Gastrocnemius medialis (tissue), 4 donors: ENCODE measurements at regions of chr20 and their contacts with region 1.

Region 1: DNA sequence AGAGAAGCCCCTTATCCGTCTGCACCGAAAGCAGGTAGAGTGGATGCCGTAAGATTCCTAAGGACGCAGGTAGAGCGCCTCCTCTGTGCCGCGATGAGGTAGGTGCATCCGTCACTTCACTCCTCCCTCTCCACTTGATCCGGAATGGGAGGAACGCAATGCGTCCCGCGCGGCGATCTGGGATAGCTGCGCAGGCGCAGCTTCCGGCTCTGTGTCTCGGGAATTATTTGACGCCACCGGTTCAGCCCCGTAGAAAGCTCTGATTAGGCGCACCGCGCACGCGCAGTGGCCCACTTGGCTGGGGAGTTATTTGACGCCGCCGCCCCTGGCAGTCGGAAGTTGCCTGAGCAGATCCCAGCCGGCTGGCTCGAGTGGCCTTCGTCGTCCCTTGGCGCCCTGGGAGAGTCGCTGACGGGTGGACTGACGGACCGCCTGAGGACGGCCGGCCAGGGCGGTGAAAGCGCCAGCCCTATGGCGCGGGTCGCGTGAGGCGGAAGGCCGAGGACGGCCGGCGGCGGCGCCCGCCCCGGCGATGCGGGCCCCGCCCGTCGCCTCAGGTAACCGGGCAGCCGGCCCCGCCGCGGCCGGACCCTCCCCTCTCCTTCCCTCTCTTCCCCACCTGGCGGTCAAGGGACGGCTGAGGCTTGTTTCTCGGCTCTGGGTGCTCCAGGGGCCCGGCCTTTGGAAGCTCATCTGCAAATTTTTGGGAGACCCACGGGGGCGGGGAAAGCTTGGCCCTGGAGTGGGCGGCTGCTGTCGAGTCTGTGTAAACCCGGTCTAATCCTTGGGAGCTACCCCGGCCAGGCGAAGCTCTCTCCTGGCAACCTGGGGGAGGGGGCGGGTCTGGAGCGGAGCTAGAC is at the start of gene RALGAPB:
- DNase-seq: peak; percentile 97 to 99
- ATAC-seq: peak; percentile 98
- H3K4me3 ChIP-seq: peak within 1 kb of the TSS; percentile 72 to 86 (median 84)
- H3K27ac ChIP-seq: peak within 1 kb of the TSS; percentile 72 to 90 (median 84)
- H3K4me1 ChIP-seq: peaks cover 25 to 31% of the 10 kb centered on the region in 2 donors
- H3K27me3 ChIP-seq: no peaks in the 10 kb centered on the region
- CTCF ChIP-seq: peak in 2 of 5 experiments; percentile 28 to 40
- POLR2A ChIP-seq: peak; percentile 32 to 45
- total RNA-seq, gene RALGAPB: 23.2 to 28.8 (median 26.0) TPM

Region 2: DNA sequence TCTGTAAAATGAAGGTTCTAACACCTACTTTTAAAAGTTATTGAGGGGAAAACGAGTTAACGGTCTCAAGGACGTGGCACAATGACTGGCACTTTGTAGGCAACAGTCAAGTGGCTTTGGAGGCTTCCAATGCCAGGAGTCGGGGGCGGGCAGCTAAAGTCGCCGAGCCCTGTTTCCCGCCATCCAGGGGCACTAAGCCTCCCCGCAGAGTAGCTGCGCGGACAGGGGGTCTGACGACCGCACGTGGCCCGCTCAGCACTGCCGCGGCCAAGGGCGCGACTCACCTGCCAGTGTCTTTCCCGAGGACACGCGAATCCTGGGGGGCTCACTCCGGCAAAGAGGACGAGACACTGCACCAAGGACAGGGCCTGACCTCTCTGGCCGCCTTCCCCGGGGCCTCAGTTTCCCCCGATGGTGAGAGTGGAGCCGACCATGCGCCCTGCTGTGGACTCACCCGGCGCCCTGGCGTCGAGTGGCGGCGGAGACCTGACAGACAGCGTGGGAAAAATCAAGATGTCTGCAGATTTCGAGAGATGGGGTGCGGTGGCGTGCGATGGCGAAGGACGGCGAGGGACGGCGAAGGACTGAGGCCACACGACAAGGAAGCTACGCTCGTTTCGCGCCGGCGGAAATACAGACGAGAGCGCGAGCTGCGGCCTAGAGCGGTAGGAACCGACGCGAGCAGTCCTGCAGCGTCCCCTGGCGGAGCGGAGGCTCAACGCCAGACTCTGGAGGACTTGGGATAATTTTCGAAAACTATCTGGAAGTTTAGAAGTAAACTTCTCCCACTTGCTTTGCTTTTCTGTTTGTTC is 37.8 kb before region 1 on chr20 and contains the start of gene SNHG17:
- in situ Hi-C with region 1: no loop called
- intact Hi-C with region 1: loop called (anchors 1 kb)
- DNase-seq: peak; percentile 76 to 85
- ATAC-seq: peak; percentile 87 to 88
- H3K4me3 ChIP-seq: peak within 1 kb of the TSS; percentile 75 to 97 (median 94)
- H3K27ac ChIP-seq: peak within 1 kb of the TSS; percentile 77 to 94 (median 90)
- H3K4me1 ChIP-seq: peaks cover 0 to 23% of the 10 kb centered on the region in 2 donors
- H3K27me3 ChIP-seq: no peaks in the 10 kb centered on the region
- CTCF ChIP-seq: peak; percentile 95 to 100 (median 99)
- POLR2A ChIP-seq: peak; percentile 57 to 75
- total RNA-seq, gene SNHG17: 6.0 to 12.2 (median 8.7) TPM

Region 3: GRCh38 chr20:38812709-38813573 is 340.2 kb after region 1 on chr20:
- in situ Hi-C with region 1: no loop called
- intact Hi-C with region 1: no loop called
- DNase-seq: no peak
- ATAC-seq: no peak
- H3K4me3 ChIP-seq: no peak overlapping the region
- H3K27ac ChIP-seq: peak overlapping the region in 3 of 4 donors; percentile 1 to 30 (median 24)
- H3K4me1 ChIP-seq: no peaks in the 10 kb centered on the region
- H3K27me3 ChIP-seq: peaks cover 3 to 10% (median 6%) of the 10 kb centered on the region in 3 donors
- CTCF ChIP-seq: no peak
- POLR2A ChIP-seq: no peak